Right ventricle myocardium inferior (tissue), 1 donor: ENCODE measurements at regions of chr15 and their contacts with region 1.

Region 1: DNA sequence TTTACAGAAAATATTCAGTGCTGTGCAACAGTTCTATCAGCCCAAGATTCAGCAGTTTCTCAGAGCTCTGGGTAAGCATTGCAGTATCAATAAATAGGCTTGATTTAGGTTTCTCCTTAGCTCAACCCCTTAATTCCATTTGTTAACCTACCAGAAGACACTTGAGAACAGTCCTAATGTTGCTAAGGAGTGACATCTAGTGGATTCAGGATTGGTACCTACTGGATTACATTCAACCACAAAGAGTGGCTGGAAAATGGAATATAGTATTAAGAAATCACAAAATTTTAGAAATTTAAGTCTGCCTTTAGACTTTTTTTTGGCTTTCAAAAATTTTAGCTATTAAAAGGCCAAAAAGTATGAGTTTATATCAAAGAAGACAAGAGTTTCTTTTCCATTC is 34.7 kb downstream of the POLG start:
- DNase-seq: no peak
- ATAC-seq: no peak

Region 2: DNA sequence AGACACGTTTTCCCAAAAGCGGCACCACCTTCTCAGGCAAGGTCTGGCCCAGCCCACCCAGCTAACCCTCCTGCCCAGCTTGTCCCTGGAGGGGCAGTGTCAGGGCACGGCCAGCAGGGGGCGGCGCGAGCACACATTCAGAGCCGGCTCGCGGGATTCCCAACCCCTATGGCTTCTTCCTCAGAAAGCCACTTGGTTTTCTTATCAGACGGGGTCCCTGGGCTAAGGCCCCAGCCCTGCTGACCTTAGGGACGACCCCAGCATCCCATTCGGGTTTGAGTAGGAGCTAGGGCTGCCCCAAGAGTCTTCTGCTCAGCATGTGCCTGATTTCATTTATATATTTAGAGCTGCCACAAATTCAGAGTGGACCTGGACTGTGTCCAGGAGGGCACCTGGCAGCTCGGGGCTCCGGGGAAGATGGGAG is 93.0 kb before region 1 on chr15:
- intact Hi-C with region 1: loop called (anchors 10 kb)
- DNase-seq: peak; percentile 92
- ATAC-seq: peak; percentile 77